MCF 10A (cell line): ENCODE measurements at regions of chr1 and their contacts with region 1.

Region 1: GRCh38 chr1:41109316-41110197 is 88.0 kb upstream of the SLFNL1 start:
- DNase-seq: peak; percentile 96
- H3K4me3 Mint-ChIP-seq: peak overlapping the region; percentile 57
- H3K27ac Mint-ChIP-seq: peak overlapping the region; percentile 76
- H3K4me1 Mint-ChIP-seq: peaks cover 36% of the 10 kb centered on the region
- H3K27me3 Mint-ChIP-seq: no peaks in the 10 kb centered on the region
- CTCF ChIP-seq: no peak

Region 2: GRCh38 chr1:40986956-40987355 is 122.6 kb before region 1 on chr1:
- CTCF ChIA-PET with region 1: no interaction called
- POLR2A ChIA-PET with region 1: no interaction called
- intact Hi-C with region 1: no loop called
- DNase-seq: no peak
- H3K4me3 Mint-ChIP-seq: no peak overlapping the region
- H3K27ac Mint-ChIP-seq: no peak overlapping the region
- H3K4me1 Mint-ChIP-seq: peaks cover 11% of the 10 kb centered on the region
- H3K27me3 Mint-ChIP-seq: no peaks in the 10 kb centered on the region
- CTCF ChIP-seq: no peak

Region 3: DNA sequence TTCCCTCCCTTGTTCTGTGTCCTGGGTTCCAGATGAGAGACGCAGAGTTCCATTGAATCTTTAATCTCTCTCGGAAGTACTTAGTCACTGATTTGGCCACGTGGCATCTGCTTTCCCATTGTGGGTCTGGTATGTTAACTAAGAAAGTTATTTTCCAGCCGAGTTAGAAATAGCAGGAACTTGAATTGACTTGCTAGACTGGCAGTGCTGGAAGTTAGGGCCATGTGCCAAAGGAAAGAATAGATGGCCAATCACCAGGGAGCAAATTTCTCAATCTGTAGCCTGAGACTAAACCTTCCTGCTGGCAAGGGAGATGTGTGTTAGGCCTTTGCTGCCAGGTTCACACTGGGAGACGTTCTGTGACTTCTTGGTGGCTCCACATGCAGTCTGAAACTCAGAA is 63.8 kb before region 1 on chr1:
- CTCF ChIA-PET with region 1: no interaction called
- POLR2A ChIA-PET with region 1: interaction called, 4 read pairs
- intact Hi-C with region 1: loop called (anchors 2 kb)
- DNase-seq: peak; percentile 95
- H3K4me3 Mint-ChIP-seq: peak overlapping the region; percentile 44
- H3K27ac Mint-ChIP-seq: peak overlapping the region; percentile 97
- H3K4me1 Mint-ChIP-seq: peaks cover 35% of the 10 kb centered on the region
- H3K27me3 Mint-ChIP-seq: no peaks in the 10 kb centered on the region
- CTCF ChIP-seq: no peak

Region 4: DNA sequence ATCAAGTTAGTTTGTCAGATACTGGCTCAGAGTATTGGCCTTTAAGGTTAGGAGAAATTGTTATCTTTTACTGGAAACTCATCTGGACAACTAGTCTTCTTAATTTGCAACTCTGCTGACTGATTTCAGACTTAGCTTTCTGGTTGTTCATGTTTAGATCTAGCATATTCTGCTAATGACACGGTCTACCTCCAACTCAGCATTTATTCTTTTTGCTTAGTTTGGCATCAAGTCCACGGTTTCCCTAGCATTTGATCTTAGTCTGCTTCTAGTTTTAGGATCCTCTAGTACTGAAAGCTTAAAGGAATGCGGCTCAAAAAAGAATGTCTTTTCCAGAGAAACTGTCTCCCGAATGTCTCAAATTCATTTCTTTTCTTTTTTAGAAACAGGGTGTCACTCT is 12.5 kb before region 1 on chr1:
- CTCF ChIA-PET with region 1: no interaction called
- POLR2A ChIA-PET with region 1: interaction called, 15 read pairs
- intact Hi-C with region 1: no loop called
- DNase-seq: no peak
- H3K4me3 Mint-ChIP-seq: no peak overlapping the region
- H3K27ac Mint-ChIP-seq: no peak overlapping the region
- H3K4me1 Mint-ChIP-seq: peaks cover 4% of the 10 kb centered on the region
- H3K27me3 Mint-ChIP-seq: no peaks in the 10 kb centered on the region
- CTCF ChIP-seq: no peak

Region 5: DNA sequence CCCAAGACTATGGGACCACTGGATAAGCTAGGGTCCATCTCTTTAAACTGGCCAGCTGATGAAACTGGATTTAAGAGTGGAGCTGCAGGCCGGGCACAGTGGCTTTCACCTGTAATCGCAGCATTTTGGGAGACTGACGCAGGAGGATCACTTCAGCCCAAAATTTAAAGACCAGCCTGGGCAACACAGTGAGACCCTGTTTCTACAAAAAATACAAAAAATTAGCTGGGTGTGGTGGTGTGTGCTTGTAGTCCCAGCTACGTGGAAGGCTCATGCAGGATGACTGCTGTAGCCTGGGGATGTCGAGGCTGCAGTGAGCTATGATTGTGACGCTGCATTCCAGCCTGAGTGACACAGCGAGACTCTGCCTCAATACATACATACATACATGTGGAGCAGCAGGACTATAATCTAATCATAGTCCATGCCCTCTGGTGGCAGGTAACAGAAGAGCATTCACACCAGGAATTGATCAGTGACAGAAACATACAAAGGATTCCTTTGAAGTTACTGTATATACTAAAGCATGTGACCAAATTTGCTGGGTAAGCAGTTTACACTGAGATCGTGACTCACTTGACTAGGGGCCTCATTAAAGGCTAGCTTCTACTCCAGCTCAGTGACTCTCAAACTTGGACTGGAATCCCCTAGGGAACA is 13.4 kb after region 1 on chr1:
- CTCF ChIA-PET with region 1: interaction called, 14 read pairs
- POLR2A ChIA-PET with region 1: interaction called, 23 read pairs
- intact Hi-C with region 1: no loop called
- DNase-seq: peak; percentile 76
- H3K4me3 Mint-ChIP-seq: no peak overlapping the region
- H3K27ac Mint-ChIP-seq: peak overlapping the region; percentile 61
- H3K4me1 Mint-ChIP-seq: peaks cover 15% of the 10 kb centered on the region
- H3K27me3 Mint-ChIP-seq: no peaks in the 10 kb centered on the region
- CTCF ChIP-seq: peak; percentile 42

Region 6: GRCh38 chr1:41135196-41135947 is 25.8 kb after region 1 on chr1:
- CTCF ChIA-PET with region 1: no interaction called
- POLR2A ChIA-PET with region 1: interaction called, 3 read pairs
- intact Hi-C with region 1: loop called (anchors 2 kb)
- DNase-seq: no peak
- H3K4me3 Mint-ChIP-seq: no peak overlapping the region
- H3K27ac Mint-ChIP-seq: no peak overlapping the region
- H3K4me1 Mint-ChIP-seq: no peaks in the 10 kb centered on the region
- H3K27me3 Mint-ChIP-seq: no peaks in the 10 kb centered on the region
- CTCF ChIP-seq: no peak

Region 7: GRCh38 chr1:41241782-41242341 is 132.3 kb after region 1 on chr1 and contains the start of gene SCMH1:
- CTCF ChIA-PET with region 1: no interaction called
- POLR2A ChIA-PET with region 1: interaction called, 6 read pairs
- intact Hi-C with region 1: loop called (anchors 2 kb)
- DNase-seq: peak; percentile 32
- H3K4me3 Mint-ChIP-seq: peak within 1 kb of the TSS; percentile 73
- H3K27ac Mint-ChIP-seq: peak within 1 kb of the TSS; percentile 76
- H3K4me1 Mint-ChIP-seq: peaks cover 6% of the 10 kb centered on the region
- H3K27me3 Mint-ChIP-seq: no peaks in the 10 kb centered on the region
- CTCF ChIP-seq: no peak
- total RNA-seq, gene SCMH1: 51.4 and 55.9 TPM in 2 replicates

Region 8: GRCh38 chr1:41268154-41268770 is 158.7 kb after region 1 on chr1:
- CTCF ChIA-PET with region 1: no interaction called
- POLR2A ChIA-PET with region 1: no interaction called
- intact Hi-C with region 1: no loop called
- DNase-seq: peak; percentile 72
- H3K4me3 Mint-ChIP-seq: no peak overlapping the region
- H3K27ac Mint-ChIP-seq: no peak overlapping the region
- H3K4me1 Mint-ChIP-seq: peaks cover 6% of the 10 kb centered on the region
- H3K27me3 Mint-ChIP-seq: no peaks in the 10 kb centered on the region
- CTCF ChIP-seq: peak; percentile 93